Heart left ventricle (tissue), 16 donors: ENCODE measurements at regions of chrX and their contacts with region 1.

Region 1: GRCh38 chrX:119871599-119872395 is at the starts of genes NDUFA1 and RNF113A:
- DNase-seq: peak; percentile 82 to 90 (median 88)
- ATAC-seq: peak; percentile 97 to 98 (median 98)
- H3K4me3 ChIP-seq: peak within 1 kb of the TSS; percentile 41 to 97 (median 74)
- H3K27ac ChIP-seq: peak within 1 kb of the TSS; percentile 88 to 99 (median 92)
- H3K4me1 ChIP-seq: peaks cover 0 to 26% (median 3%) of the 10 kb centered on the region in 12 donors
- H3K27me3 ChIP-seq: no peaks in the 10 kb centered on the region
- CTCF ChIP-seq: no peak
- POLR2A ChIP-seq: peak in 1 of 2 donors; percentile 41
- total RNA-seq, gene NDUFA1: 288 to 622 (median 433) TPM
- total RNA-seq, gene RNF113A: 8.0 to 12.8 (median 9.6) TPM

Region 2: GRCh38 chrX:118108304-118108703 is 1763.5 kb before region 1 on chrX:
- intact Hi-C with region 1: no loop called
- DNase-seq: no peak
- ATAC-seq: no peak
- H3K4me3 ChIP-seq: no peak overlapping the region
- H3K27ac ChIP-seq: no peak overlapping the region
- H3K4me1 ChIP-seq: no peaks in the 10 kb centered on the region
- H3K27me3 ChIP-seq: no peaks in the 10 kb centered on the region
- CTCF ChIP-seq: no peak
- POLR2A ChIP-seq: no peak

Region 3: DNA sequence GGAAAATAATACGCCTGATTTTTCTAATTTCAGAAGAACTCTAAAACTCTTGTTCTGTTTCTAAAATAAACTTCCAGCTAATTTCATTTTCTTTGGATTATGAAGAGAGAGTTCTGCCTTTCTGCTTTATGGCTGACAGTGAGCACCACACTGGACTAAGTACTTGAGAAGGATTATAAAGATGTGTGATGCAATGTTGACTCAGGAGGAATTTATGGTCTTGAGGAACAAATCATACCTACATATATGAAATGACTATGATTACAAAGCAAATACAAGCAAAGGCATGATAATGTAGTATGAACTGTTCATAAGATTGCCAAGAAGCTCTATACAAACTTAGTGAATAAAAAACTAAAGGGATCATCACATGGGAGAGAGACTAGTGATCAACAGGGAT is 416.5 kb before region 1 on chrX:
- intact Hi-C with region 1: no loop called
- DNase-seq: no peak
- ATAC-seq: no peak
- H3K4me3 ChIP-seq: no peak overlapping the region
- H3K27ac ChIP-seq: no peak overlapping the region
- H3K4me1 ChIP-seq: no peaks in the 10 kb centered on the region
- H3K27me3 ChIP-seq: peaks cover 0 to 2% (median 0%) of the 10 kb centered on the region in 9 donors
- CTCF ChIP-seq: no peak
- POLR2A ChIP-seq: no peak

Region 4: DNA sequence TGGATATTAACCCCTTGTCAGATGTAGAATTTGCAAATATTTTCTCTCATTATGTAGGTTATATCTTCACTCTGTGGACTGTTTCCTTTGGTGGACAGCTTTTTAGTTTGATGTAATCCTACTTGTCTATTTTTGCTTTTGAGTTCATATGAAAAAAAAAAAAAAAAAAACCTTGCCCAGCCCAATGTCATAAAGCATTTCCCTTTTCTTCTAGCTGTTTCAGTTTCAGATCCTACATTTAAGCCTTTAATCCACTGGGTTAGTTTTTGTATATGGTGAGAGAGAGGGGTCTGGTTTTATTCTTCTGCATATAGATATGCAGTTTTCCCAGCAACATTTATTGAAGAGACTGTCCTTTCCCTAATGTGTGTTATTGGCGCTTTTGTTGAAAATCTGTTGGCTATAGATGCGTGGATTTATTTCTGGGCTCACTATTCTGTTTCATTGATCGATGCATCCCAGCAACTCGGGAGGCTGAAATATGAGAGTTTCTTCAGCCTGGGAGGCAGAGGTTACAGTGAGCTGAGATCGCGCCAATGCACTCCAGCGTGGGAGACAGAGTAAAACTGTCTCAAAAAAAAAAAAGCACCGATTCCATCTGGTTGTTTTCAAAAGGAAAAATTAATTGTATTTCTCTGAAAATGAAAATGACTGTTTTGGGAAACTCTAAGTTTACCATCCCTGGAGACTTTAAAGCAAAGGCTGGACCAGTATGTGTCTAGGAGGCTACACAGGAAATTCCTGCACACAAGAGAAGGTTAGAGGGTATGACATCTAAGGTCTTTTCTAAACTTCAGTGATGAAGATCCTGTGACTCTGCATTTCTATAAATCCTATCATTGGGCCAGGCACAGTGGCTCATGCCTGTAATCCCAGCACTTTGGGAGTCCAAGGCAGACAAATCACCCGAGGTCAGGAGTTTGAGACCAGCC is 342.2 kb before region 1 on chrX:
- intact Hi-C with region 1: no loop called
- DNase-seq: peak in 1 of 5 donors; percentile 9
- ATAC-seq: peak in 1 of 4 donors; percentile 39
- H3K4me3 ChIP-seq: no peak overlapping the region
- H3K27ac ChIP-seq: peak overlapping the region in 4 of 12 donors; percentile 4 to 46 (median 34)
- H3K4me1 ChIP-seq: peaks cover 0 to 11% (median 0%) of the 10 kb centered on the region in 12 donors
- H3K27me3 ChIP-seq: no peaks in the 10 kb centered on the region
- CTCF ChIP-seq: no peak
- POLR2A ChIP-seq: no peak

Region 5: DNA sequence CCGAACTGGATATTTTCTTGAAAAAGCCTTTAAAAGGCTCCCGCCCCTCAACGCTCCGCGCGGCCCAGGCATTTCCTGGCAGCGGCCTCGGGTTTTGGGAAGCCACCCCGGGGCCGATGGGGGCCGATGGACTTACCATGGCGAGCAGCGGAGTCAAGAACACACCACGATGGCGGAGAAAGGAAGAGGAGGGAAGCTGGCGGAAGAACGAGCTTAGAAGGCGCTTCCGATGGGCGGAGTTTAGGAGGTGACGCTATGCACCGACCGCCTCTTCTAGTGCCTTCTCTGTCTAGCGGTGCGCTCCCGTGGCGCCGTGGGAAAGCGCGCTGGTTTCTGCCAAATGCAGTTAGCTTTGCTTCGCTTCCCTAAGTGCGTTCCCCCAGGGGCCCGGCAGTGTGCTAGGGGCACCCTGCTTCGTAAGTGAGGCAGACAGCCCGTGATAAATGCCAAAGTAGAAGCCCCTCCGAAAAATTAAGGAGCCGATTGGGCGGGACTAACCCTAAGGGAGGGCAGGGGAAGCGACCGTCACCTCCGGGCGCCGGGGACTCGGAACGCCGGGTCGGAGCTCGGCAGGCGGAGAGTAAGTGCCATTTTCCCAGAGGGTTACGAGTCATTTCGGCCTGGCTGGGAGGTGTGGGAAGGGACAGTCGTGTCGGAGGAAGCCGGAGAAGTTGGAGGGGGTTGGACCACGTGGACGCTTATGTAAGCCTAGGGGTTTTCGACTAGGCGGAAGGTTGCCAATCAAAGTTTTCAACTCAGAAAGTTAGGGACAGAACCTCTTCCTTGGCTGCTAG is 80.2 kb before region 1 on chrX and contains the start of gene RPL39:
- intact Hi-C with region 1: loop called in 2 of 10 experiments (anchors 5 to 10 kb)
- DNase-seq: peak; percentile 84 to 90 (median 87)
- ATAC-seq: peak; percentile 97 to 98 (median 97)
- H3K4me3 ChIP-seq: peak within 1 kb of the TSS; percentile 54 to 97 (median 74)
- H3K27ac ChIP-seq: peak within 1 kb of the TSS; percentile 85 to 99 (median 94)
- H3K4me1 ChIP-seq: peaks cover 0 to 45% (median 16%) of the 10 kb centered on the region in 12 donors
- H3K27me3 ChIP-seq: no peaks in the 10 kb centered on the region
- CTCF ChIP-seq: no peak
- POLR2A ChIP-seq: peak in 1 of 2 donors; percentile 45
- total RNA-seq, gene RPL39: 933 to 1,886 (median 1,201) TPM

Region 6: GRCh38 chrX:119943185-119943988 is 71.6 kb after region 1 on chrX and contains the start of gene NKAP:
- intact Hi-C with region 1: loop called in 2 of 10 experiments (anchors 10 kb)
- DNase-seq: peak; percentile 79 to 83 (median 80)
- ATAC-seq: peak; percentile 92 to 97 (median 96)
- H3K4me3 ChIP-seq: peak within 1 kb of the TSS; percentile 63 to 96 (median 77)
- H3K27ac ChIP-seq: peak within 1 kb of the TSS; percentile 58 to 91 (median 88)
- H3K4me1 ChIP-seq: peaks cover 0 to 15% (median 7%) of the 10 kb centered on the region in 12 donors
- H3K27me3 ChIP-seq: peaks cover 0 to 4% (median 0%) of the 10 kb centered on the region in 9 donors
- CTCF ChIP-seq: peak in 3 of 12 donors; percentile 9 to 14 (median 13)
- POLR2A ChIP-seq: peak in 1 of 2 donors; percentile 40
- total RNA-seq, gene NKAP: 2.9 to 7.8 (median 5.9) TPM